IMR-90 (cell line): ENCODE measurements at regions of chr4 and their contacts with region 1.

Region 1: DNA sequence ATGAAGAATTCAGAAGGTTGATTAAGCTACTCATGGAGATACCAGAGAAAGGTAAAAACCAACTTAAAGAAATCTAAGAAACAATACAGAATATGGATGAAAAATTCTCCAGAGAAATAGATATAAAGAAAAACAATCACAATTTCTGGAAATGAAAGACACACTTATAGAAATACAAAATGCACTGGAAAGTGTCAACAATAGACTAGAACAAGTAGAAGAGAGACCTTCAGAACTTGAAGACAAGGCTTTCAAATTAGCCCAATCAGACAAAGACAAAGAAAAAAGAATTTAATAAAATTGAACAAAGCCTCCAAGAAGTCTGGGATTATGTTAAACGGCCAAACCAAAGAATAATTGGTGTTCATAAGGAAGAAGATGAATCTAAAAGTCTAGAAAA is 9.6 kb downstream of the STBD1 start:
- DNase-seq: no peak
- ATAC-seq: no peak
- H3K4me3 ChIP-seq: no peak overlapping the region
- H3K27ac ChIP-seq: no peak overlapping the region
- H3K4me1 ChIP-seq: no peaks in the 10 kb centered on the region
- H3K27me3 ChIP-seq: no peaks in the 10 kb centered on the region
- CTCF ChIP-seq: no peak
- POLR2A ChIP-seq: no peak
- RAD21 ChIP-seq: no peak

Region 2: GRCh38 chr4:74397748-74398426 is 1918.2 kb before region 1 on chr4:
- CTCF ChIA-PET with region 1: no interaction called
- POLR2A ChIA-PET with region 1: no interaction called
- dilution Hi-C with region 1: no loop called
- in situ Hi-C with region 1: no loop called
- intact Hi-C with region 1: no loop called
- DNase-seq: peak; percentile 4
- ATAC-seq: no peak
- H3K4me3 ChIP-seq: no peak overlapping the region
- H3K27ac ChIP-seq: no peak overlapping the region
- H3K4me1 ChIP-seq: peaks cover 9% of the 10 kb centered on the region; the same call in 1 of the 2 replicates
- H3K27me3 ChIP-seq: no peaks in the 10 kb centered on the region
- CTCF ChIP-seq: no peak
- POLR2A ChIP-seq: no peak
- RAD21 ChIP-seq: no peak

Region 3: GRCh38 chr4:76074468-76074867 is 241.7 kb before region 1 on chr4 and contains the start of gene ART3:
- CTCF ChIA-PET with region 1: no interaction called
- POLR2A ChIA-PET with region 1: interaction called, 18 read pairs
- dilution Hi-C with region 1: no loop called
- in situ Hi-C with region 1: no loop called
- intact Hi-C with region 1: no loop called
- DNase-seq: peak; percentile 13
- ATAC-seq: peak; percentile 61; the same call in 1 of the 2 replicates
- H3K4me3 ChIP-seq: no peak within 1 kb of the TSS
- H3K27ac ChIP-seq: no peak within 1 kb of the TSS
- H3K4me1 ChIP-seq: no peaks in the 10 kb centered on the region
- H3K27me3 ChIP-seq: peaks cover 5% of the 10 kb centered on the region
- CTCF ChIP-seq: no peak
- POLR2A ChIP-seq: no peak
- RAD21 ChIP-seq: no peak
- total RNA-seq, gene ART3: not detected in 2 replicates